WTC11 (cell line): ENCODE measurements at regions of chr21 and their contacts with region 1.

Region 1: DNA sequence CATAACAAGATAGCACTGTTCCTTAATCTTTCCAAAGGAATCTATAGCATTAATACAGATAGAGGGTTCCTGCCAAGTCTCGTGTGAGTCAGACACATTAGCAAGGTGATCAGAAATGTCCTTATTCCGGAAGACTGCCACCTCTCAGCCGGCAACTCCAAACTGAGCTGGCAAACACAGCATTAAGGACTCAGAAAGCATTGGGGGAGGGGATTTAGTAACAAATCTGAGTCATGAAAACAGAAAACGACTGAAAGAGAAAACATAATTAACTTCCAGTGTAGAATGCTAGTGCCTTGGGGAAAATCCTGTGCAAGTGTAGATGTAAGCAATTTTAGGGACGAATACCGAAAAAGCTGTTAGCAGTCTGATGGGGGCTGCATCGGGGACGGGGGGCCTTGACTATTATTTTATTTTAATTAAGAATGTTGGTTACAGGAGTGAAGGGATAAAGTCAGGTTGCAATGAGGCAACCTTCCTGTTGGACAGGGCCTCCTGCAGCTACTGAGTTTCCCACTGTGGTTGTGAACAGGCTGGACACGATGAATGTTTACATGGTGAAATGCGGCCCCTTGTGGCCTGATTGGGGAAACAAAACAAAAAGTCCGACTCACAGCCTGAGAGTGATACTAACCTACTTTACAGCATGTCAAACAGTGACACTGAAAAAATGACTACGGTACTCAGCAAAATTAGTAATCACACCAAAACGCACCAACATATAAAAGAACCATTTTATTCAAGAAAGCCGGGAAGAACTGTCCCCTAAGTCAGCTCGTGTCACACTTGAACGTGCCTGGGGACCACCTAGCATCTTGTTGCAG is 20.7 kb downstream of the MIS18A start:
- DNase-seq: peak; percentile 73
- ATAC-seq: peak; percentile 91
- H3K4me3 Mint-ChIP-seq: no peak overlapping the region
- H3K27ac Mint-ChIP-seq: no peak overlapping the region
- H3K4me1 Mint-ChIP-seq: peaks cover 5% of the 10 kb centered on the region
- H3K27me3 Mint-ChIP-seq: no peaks in the 10 kb centered on the region
- CTCF ChIP-seq: peak; percentile 66

Region 2: DNA sequence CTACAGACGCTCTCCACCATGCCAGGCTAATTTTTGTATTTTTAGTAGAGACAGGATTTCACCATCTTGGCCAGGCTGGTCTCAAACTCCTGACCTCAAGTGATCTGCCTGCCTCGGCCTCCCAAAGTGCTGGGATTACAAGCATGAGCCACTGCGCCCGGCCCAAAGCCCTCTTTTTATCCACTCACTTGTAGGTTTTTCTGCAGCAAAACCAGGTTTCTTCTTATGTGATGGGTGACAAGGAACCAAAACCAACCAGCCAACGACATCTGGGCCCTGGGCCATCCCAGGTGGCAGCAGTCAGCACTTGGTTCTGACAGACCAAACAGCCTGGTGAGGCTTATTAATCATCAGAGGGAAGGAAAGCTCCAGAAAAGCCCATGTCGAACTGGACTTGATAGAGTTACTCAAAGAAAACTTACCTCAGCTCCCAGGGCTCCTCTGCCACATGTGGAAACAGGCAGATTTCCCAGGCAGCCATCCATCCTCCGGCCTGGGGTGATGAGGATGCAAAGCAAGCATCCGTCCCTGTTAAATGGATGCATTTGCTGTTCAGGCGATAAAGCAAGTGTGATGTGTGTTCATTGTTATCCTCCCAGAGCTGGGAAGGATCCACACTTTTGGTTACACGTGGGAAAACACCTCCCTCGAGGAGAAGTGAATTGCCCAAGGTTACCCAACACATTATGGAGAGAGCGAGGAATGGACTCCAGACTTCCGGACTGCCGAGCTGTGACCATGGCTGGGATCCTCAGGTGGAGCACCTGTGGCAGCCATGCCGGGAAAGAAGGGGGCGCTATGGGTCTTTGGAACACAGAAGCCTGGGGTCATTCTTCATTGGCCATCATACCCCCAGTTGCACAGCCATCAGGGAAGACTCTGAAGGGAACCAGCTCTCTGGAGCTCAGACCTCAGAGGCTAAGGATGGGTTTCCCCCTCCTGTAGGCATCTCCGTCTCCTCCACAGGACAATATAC is 266.5 kb before region 1 on chr21:
- CTCF ChIA-PET with region 1: interaction called, 26 read pairs
- POLR2A ChIA-PET with region 1: no interaction called
- DNase-seq: peak; percentile 72
- ATAC-seq: peak; percentile 91
- H3K4me3 Mint-ChIP-seq: no peak overlapping the region
- H3K27ac Mint-ChIP-seq: no peak overlapping the region
- H3K4me1 Mint-ChIP-seq: peaks cover 8% of the 10 kb centered on the region
- H3K27me3 Mint-ChIP-seq: no peaks in the 10 kb centered on the region
- CTCF ChIP-seq: peak; percentile 37; the same call in 1 of the 2 replicates